Activated T-helper 1 cell treated with anti-CD3 and anti-CD28 coated beads, Interleukin-12 subunit alpha, Interleukin-12 subunit beta, Interleukin-2, Interleukin-4 antibody, amounts not matched to agents 30 ng/mL and 10 ng/mL and 1 ng/mL, durations not matched to agents 14 hours and 24 hours and 36 hours (primary cell): ENCODE measurements at regions of chr5 and their contacts with region 1.

Region 1: DNA sequence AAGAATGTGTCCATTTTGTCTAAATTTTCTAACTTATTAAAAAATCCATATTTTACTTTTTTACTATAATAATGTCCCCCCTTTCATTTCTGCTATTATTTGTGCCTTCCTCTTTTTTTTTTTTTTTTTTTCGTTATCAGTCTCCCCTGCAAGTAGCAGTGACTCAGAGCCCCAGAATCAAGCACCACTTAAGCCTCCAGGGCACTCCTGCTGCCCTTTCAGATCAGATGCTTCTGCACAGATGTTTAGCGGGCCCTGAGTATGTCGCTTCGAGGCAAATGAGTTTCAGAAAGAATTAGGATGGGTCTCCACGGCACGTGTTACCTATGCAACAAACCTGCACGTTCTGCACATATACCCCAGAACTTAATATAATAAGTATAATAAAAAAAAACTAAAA is 11.7 kb downstream of the MED7 start:
- DNase-seq: no peak
- H3K4me3 Mint-ChIP-seq: no peak overlapping the region
- H3K27ac Mint-ChIP-seq: no peak overlapping the region
- H3K4me1 Mint-ChIP-seq: peaks cover 41% of the 10 kb centered on the region
- H3K27me3 Mint-ChIP-seq: no peaks in the 10 kb centered on the region

Region 2: GRCh38 chr5:155839251-155840039 is 1291.5 kb before region 1 on chr5:
- intact Hi-C with region 1: loop called (anchors 10 kb)
- DNase-seq: no peak
- H3K4me3 Mint-ChIP-seq: no peak overlapping the region
- H3K27ac Mint-ChIP-seq: no peak overlapping the region
- H3K4me1 Mint-ChIP-seq: no peaks in the 10 kb centered on the region
- H3K27me3 Mint-ChIP-seq: peaks cover 2% of the 10 kb centered on the region

Region 3: GRCh38 chr5:156420665-156421064 is 710.3 kb before region 1 on chr5:
- intact Hi-C with region 1: loop called (anchors 5 kb)
- DNase-seq: no peak
- H3K4me3 Mint-ChIP-seq: no peak overlapping the region
- H3K27ac Mint-ChIP-seq: no peak overlapping the region
- H3K4me1 Mint-ChIP-seq: no peaks in the 10 kb centered on the region
- H3K27me3 Mint-ChIP-seq: peaks cover 17% of the 10 kb centered on the region

Region 4: GRCh38 chr5:156815988-156816599 is 314.8 kb before region 1 on chr5:
- intact Hi-C with region 1: loop called (anchors 2 kb)
- DNase-seq: peak; percentile 45
- H3K4me3 Mint-ChIP-seq: no peak overlapping the region
- H3K27ac Mint-ChIP-seq: no peak overlapping the region
- H3K4me1 Mint-ChIP-seq: peaks cover 33% of the 10 kb centered on the region
- H3K27me3 Mint-ChIP-seq: no peaks in the 10 kb centered on the region

Region 5: DNA sequence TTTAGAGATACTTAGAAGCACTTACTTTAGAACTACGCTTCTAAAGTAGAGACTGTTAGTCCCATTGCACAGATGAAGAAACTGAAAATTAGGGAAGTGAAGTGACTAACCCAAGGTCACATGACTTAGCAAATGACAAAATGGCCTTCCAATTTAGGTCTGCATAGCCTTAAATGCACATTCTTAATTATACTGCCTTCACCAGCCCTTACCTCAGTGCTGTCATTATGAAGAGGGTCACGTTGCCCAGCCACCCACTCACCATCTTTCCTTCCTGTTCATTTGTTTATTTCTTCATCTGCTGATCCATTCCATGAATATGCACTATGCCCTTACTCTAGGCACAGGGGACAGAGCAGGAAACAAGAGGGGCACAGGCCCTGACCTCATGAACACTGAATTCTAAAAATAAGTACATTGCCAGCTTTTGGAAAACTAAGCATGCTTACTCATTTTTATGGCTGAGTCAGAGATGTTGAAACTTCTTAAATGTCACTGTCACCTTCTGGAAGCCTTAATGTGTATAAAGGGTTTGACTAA is 30.7 kb before region 1 on chr5:
- intact Hi-C with region 1: loop called (anchors 1 kb)
- DNase-seq: no peak
- H3K4me3 Mint-ChIP-seq: peak overlapping the region; percentile 54
- H3K27ac Mint-ChIP-seq: peak overlapping the region; percentile 95
- H3K4me1 Mint-ChIP-seq: peaks cover 50% of the 10 kb centered on the region
- H3K27me3 Mint-ChIP-seq: no peaks in the 10 kb centered on the region

Region 6: GRCh38 chr5:157116483-157116954 is 14.4 kb before region 1 on chr5:
- intact Hi-C with region 1: loop called (anchors 1 kb)
- DNase-seq: no peak
- H3K4me3 Mint-ChIP-seq: peak overlapping the region; percentile 6
- H3K27ac Mint-ChIP-seq: peak overlapping the region; percentile 61
- H3K4me1 Mint-ChIP-seq: peaks cover 40% of the 10 kb centered on the region
- H3K27me3 Mint-ChIP-seq: no peaks in the 10 kb centered on the region

Region 7: DNA sequence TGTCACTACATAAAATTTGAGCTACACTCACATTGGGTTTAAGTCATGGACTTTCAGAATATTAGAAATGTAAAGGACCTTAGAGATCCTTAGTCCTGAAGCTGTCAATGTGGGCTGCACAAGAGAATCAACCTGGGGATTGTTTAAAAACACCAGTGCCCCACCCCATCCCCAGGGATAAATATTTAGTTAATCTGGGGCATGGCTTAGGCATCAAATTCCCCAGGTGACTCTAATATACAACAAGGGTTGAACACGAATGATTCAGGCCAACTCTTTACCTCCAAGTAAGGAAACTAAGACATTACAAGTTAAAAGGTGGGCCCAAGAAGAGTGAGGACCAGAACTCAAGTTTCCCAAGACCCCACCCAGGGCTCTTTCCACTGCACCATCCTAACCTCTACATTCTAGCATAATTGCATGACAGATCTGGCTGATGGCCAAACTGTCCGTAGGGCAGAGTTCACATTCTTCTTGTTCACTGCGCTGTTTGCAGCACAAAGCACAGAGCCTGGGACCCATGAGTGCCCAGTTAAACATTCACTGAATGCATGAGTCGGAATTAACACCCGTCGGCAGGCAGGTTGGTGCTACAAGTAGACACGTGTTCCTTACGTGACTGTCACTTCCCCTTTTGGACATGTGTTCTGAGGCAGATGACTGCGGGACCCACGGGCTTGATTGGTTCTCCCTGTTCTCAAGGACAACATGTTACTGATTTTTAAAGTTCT is 160.2 kb after region 1 on chr5:
- intact Hi-C with region 1: no loop called
- DNase-seq: no peak
- H3K4me3 Mint-ChIP-seq: no peak overlapping the region
- H3K27ac Mint-ChIP-seq: peak overlapping the region; percentile 84
- H3K4me1 Mint-ChIP-seq: peaks cover 65% of the 10 kb centered on the region
- H3K27me3 Mint-ChIP-seq: no peaks in the 10 kb centered on the region